HepG2 (cell line): ENCODE measurements at regions of chr1 and their contacts with region 1.

Region 1: GRCh38 chr1:44631647-44632539 is 42.4 kb downstream of the TMEM53 start:
- DNase-seq: peak; percentile 84
- ATAC-seq: peak; percentile 85
- H3K4me3 ChIP-seq: peak overlapping the region; percentile 66 to 85 (median 76)
- H3K27ac ChIP-seq: peak overlapping the region; percentile 97
- H3K4me1 ChIP-seq: peaks cover 38% of the 10 kb centered on the region
- H3K27me3 ChIP-seq: no peaks in the 10 kb centered on the region
- CTCF ChIP-seq: no peak
- EP300 ChIP-seq: peak in 1 of 2 experiments; percentile 33; a peak in 1 of 4 replicates
- POLR2A ChIP-seq: peak; percentile 75 to 83
- RAD21 ChIP-seq: peak; percentile 71

Region 2: GRCh38 chr1:44531785-44532566 is 99.9 kb before region 1 on chr1:
- CTCF ChIA-PET with region 1: no interaction called
- POLR2A ChIA-PET with region 1: no interaction called
- in situ Hi-C with region 1: no loop called
- intact Hi-C with region 1: no loop called
- DNase-seq: peak; percentile 74
- ATAC-seq: peak; percentile 77
- H3K4me3 ChIP-seq: no peak overlapping the region
- H3K27ac ChIP-seq: no peak overlapping the region
- H3K4me1 ChIP-seq: peaks cover 24% of the 10 kb centered on the region
- H3K27me3 ChIP-seq: no peaks in the 10 kb centered on the region
- CTCF ChIP-seq: no peak
- EP300 ChIP-seq: peak in 1 of 2 experiments; percentile 28; a peak in 1 of 4 replicates
- POLR2A ChIP-seq: no peak
- RAD21 ChIP-seq: no peak

Region 3: DNA sequence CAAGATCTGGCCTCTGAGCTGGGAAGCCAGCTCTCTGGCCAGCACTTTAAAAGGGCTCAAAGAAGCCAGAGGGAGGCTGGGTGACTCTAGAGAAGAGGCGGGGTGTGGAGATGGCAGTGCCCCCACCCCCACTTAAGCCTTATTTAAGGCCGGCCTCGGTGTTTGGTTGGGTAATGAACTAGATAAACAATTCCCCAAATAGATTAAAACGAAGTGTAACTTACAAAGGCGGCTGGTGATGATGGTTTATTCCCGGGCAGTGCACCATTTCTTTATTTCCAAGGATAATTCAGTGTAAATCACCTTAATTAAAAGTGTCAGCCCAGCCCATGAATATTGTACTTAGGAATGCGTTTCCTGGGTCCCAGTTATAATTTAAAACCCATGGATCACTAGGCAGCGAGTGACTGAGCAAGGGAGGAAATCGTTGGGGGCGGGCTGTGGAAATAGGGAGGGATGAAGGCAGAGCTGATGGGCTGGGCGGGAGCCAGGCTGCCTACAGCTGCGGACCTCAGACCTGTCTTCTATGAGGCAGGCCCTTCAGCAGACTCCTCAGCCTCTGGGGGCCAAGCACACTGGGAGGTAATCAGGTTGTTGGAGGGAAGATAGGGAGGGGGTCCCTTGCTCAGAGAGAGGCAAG is 12.5 kb before region 1 on chr1:
- CTCF ChIA-PET with region 1: no interaction called
- POLR2A ChIA-PET with region 1: interaction called, 18 read pairs
- in situ Hi-C with region 1: no loop called
- intact Hi-C with region 1: no loop called
- DNase-seq: no peak
- ATAC-seq: no peak
- H3K4me3 ChIP-seq: no peak overlapping the region
- H3K27ac ChIP-seq: no peak overlapping the region
- H3K4me1 ChIP-seq: peaks cover 15% of the 10 kb centered on the region; the same call in 1 of the 2 replicates
- H3K27me3 ChIP-seq: peaks cover 0 to 31% of the 10 kb centered on the region in 2 experiments; a peak in 2 of 5 replicates
- CTCF ChIP-seq: no peak
- EP300 ChIP-seq: no peak
- POLR2A ChIP-seq: no peak
- RAD21 ChIP-seq: no peak

Region 4: GRCh38 chr1:44652445-44653106 is 20.7 kb after region 1 on chr1:
- CTCF ChIA-PET with region 1: no interaction called
- POLR2A ChIA-PET with region 1: interaction called, 25 read pairs
- in situ Hi-C with region 1: no loop called
- intact Hi-C with region 1: no loop called
- DNase-seq: peak; percentile 46
- ATAC-seq: peak; percentile 81
- H3K4me3 ChIP-seq: no peak overlapping the region
- H3K27ac ChIP-seq: no peak overlapping the region
- H3K4me1 ChIP-seq: peaks cover 21% of the 10 kb centered on the region
- H3K27me3 ChIP-seq: no peaks in the 10 kb centered on the region
- CTCF ChIP-seq: peak; percentile 96
- EP300 ChIP-seq: no peak
- POLR2A ChIP-seq: 0 out of 4 replicates have a peak, but pooled peaks of 1 of the 2 experiments have one; percentile 7
- RAD21 ChIP-seq: peak; percentile 88

Region 5: DNA sequence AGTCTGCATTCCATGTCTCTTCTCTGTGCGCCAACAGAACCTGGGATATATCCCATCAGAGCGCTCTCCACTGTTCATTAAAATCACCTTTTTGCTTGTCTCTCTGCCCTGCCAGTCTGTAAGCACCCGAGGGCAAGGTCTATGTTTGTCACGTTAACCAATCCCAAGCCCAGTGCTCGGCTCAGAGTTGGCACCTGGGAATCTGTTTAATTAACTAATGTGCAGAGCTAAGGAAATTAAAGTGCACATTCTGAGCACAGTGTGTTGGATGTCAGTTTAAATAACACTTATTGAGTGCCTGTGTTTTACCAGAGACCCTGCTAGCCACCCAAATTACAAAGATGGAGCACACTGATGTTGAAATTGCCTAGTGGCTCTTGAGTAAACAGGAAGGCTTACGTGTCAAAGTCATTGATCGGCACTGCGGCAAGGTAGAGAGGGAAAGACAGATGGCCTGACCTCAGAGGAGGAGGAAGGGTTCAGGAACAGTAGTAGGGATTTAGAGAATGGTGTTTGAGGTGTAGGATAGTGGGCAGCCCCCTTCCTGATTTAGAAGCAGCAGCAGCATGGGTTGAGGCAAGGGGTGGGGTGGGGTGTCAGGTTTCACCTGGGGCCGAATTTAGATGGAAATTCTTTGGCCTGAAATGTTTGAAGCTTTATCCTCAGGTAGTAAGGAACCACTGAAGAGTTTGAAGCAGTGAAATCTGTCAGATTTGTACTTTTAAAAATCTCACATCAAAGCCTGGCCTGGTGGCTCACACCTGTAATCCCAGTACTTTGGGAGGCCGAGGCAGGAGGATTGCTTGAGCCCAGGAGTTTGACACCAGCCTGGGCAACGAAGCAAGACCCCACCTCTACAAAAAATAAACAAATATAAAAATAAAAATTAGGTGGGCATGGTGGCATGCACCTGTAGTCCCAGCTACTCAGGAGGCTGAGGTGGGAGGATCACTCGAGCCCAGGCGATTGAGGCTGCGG is 50.3 kb after region 1 on chr1:
- CTCF ChIA-PET with region 1: no interaction called
- POLR2A ChIA-PET with region 1: interaction called, 11 read pairs
- in situ Hi-C with region 1: no loop called
- intact Hi-C with region 1: no loop called
- DNase-seq: peak; percentile 89
- ATAC-seq: peak; percentile 93
- H3K4me3 ChIP-seq: peak overlapping the region; percentile 47 to 54 (median 49); a peak in 5 of 6 replicates
- H3K27ac ChIP-seq: peak overlapping the region; percentile 87
- H3K4me1 ChIP-seq: peaks cover 89% of the 10 kb centered on the region
- H3K27me3 ChIP-seq: no peaks in the 10 kb centered on the region
- CTCF ChIP-seq: no peak; the same call in 1 of the 2 replicates
- EP300 ChIP-seq: peak; percentile 13 to 90; a peak in 3 of 4 replicates
- POLR2A ChIP-seq: peak in 1 of 2 experiments; percentile 24; a peak in 1 of 4 replicates
- RAD21 ChIP-seq: peak; percentile 31; the same call in 1 of the 2 replicates

Region 6: DNA sequence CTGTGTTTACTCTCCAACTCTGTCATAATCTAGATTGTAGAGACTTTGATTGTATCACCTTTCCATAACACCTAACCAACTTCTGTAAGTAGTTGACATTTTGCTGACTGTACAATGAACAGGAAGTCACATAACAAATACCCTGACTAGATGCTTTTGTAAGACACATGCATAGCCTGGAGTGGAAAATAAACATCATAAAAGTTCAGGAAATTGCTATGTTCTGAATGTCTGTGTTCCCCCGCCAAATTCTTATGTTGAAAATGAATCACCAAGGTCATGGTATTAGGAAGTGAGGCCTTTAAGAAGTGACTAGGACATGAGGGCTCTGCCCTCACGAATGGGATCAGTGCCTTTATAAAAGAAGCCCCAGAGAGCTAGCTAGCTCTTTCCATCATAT is 614.9 kb after region 1 on chr1:
- CTCF ChIA-PET with region 1: no interaction called
- POLR2A ChIA-PET with region 1: no interaction called
- in situ Hi-C with region 1: no loop called
- intact Hi-C with region 1: no loop called
- DNase-seq: peak; percentile 73
- ATAC-seq: no peak; the same call in 2 of the 3 replicates
- H3K4me3 ChIP-seq: no peak overlapping the region
- H3K27ac ChIP-seq: no peak overlapping the region
- H3K4me1 ChIP-seq: peaks cover 15% of the 10 kb centered on the region
- H3K27me3 ChIP-seq: no peaks in the 10 kb centered on the region
- CTCF ChIP-seq: no peak
- EP300 ChIP-seq: peak in 1 of 2 experiments; percentile 73; a peak in 1 of 4 replicates
- POLR2A ChIP-seq: no peak
- RAD21 ChIP-seq: no peak